ENCODE measurements at regions of chr17 and their contacts with region 1.

Region 1: GRCh38 chr17:60142872-60143499 is 6.8 kb upstream of the CA4 start:
- DNase-seq: peak; percentile 80 to 91
- ATAC-seq: peak; percentile 79 to 88
- H3K4me3 ChIP-seq: peak overlapping the region; percentile 17; the same call in 1 of the 3 replicates
- H3K27ac ChIP-seq: peak overlapping the region in 1 of 2 experiments; percentile 64; a peak in 3 of 6 replicates
- H3K4me1 ChIP-seq: peaks cover 21% of the 10 kb centered on the region
- CTCF ChIP-seq: peak; percentile 94
- EP300 ChIP-seq: no peak
- POLR2A ChIP-seq: no peak
- RAD21 ChIP-seq: peak; percentile 86 to 93

Region 2: GRCh38 chr17:60127068-60128054 is 15.6 kb before region 1 on chr17:
- CTCF ChIA-PET with region 1: interaction called, 90 read pairs
- POLR2A ChIA-PET with region 1: interaction called, 5 read pairs
- DNase-seq: no peak
- ATAC-seq: peak in 1 of 2 experiments; percentile 22; a peak in 1 of 6 replicates
- H3K4me3 ChIP-seq: no peak overlapping the region
- H3K27ac ChIP-seq: no peak overlapping the region
- H3K4me1 ChIP-seq: no peaks in the 10 kb centered on the region
- CTCF ChIP-seq: no peak
- EP300 ChIP-seq: no peak
- POLR2A ChIP-seq: no peak
- RAD21 ChIP-seq: no peak

Region 3: GRCh38 chr17:60154616-60155426 is 11.8 kb after region 1 on chr17:
- CTCF ChIA-PET with region 1: interaction called, 150 read pairs
- POLR2A ChIA-PET with region 1: no interaction called
- DNase-seq: no peak
- ATAC-seq: no peak
- H3K4me3 ChIP-seq: no peak overlapping the region
- H3K27ac ChIP-seq: no peak overlapping the region
- H3K4me1 ChIP-seq: peaks cover 12% of the 10 kb centered on the region
- CTCF ChIP-seq: no peak
- EP300 ChIP-seq: no peak
- POLR2A ChIP-seq: no peak
- RAD21 ChIP-seq: no peak

Region 4: DNA sequence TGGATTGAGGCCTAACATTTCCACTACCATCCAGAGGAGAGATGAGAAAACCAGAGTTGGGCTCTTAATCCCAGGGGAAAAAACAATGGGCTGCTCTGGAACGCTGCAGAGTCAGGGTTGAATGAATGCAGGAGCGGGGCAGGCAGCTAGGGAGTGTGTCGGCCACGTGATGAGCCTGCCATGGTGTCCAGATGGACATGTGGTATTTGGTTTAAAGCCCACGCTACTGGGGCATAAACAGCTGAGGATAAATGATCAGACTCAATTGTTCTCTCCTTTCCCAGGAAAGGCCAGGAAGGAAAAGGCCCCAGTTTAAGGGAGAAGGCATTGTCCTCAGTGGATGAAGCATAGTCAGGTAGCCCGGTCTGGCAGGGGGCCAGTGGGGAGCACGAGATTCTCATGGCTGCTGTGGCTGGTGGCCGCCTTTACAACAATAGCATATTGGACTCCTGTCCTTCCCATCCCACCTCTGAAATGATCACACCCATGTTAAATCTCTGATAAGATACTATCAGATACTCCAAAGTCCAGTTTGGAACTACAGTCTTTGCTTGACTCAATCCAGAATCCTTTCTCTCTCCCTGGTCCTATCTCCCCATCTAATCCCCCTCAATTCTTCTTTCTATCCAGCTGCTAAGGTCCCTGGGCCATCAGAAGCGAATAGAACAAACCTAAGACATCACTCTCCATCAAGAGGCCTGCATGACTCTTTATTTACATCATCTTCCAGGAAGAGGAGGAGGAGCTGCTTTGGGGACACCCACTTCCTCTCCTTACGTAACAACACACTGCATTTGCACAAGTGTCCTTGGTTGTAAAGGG is 27.1 kb after region 1 on chr17:
- CTCF ChIA-PET with region 1: interaction called, 35 read pairs
- POLR2A ChIA-PET with region 1: no interaction called
- DNase-seq: no peak
- ATAC-seq: no peak
- H3K4me3 ChIP-seq: no peak overlapping the region
- H3K27ac ChIP-seq: peak overlapping the region in 1 of 2 experiments; percentile 25; a peak in 1 of 6 replicates
- H3K4me1 ChIP-seq: peaks cover 33% of the 10 kb centered on the region
- CTCF ChIP-seq: no peak
- EP300 ChIP-seq: no peak
- POLR2A ChIP-seq: no peak
- RAD21 ChIP-seq: no peak

Region 5: GRCh38 chr17:60231234-60231633 is 88.2 kb after region 1 on chr17:
- CTCF ChIA-PET with region 1: interaction called, 14 read pairs
- POLR2A ChIA-PET with region 1: no interaction called
- DNase-seq: peak; percentile 41 to 44
- ATAC-seq: peak; percentile 88 to 92
- H3K4me3 ChIP-seq: no peak overlapping the region
- H3K27ac ChIP-seq: no peak overlapping the region
- H3K4me1 ChIP-seq: peaks cover 6% of the 10 kb centered on the region; the same call in 1 of the 3 replicates
- CTCF ChIP-seq: peak; percentile 68
- EP300 ChIP-seq: no peak
- POLR2A ChIP-seq: no peak
- RAD21 ChIP-seq: peak; percentile 68 to 72

Region 6: DNA sequence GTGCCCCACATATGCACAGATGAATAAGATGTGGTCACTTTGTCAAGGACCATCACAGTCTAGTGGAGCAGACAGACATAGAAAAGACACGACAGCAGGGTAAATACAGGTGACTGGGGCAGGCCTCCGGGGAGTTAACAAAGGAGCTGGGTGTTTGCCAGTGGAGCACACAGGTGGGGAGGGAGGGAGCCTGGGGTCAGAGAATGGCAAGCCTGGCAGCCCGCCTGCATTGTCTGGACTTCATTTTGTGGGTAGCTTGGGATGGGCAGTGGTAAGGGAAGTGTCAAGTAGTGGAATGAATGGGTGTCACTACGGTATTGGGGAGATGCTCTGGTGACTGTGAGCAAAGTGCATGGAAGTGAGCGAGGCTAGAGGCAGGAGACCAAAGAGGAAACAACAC is 288.5 kb after region 1 on chr17:
- CTCF ChIA-PET with region 1: interaction called, 21 read pairs
- POLR2A ChIA-PET with region 1: no interaction called
- DNase-seq: no peak
- ATAC-seq: no peak
- H3K4me3 ChIP-seq: no peak overlapping the region
- H3K27ac ChIP-seq: no peak overlapping the region
- H3K4me1 ChIP-seq: no peaks in the 10 kb centered on the region
- CTCF ChIP-seq: no peak
- EP300 ChIP-seq: no peak
- POLR2A ChIP-seq: no peak
- RAD21 ChIP-seq: no peak

Region 7: GRCh38 chr17:60571551-60571950 is 428.6 kb after region 1 on chr17:
- CTCF ChIA-PET with region 1: no interaction called
- POLR2A ChIA-PET with region 1: no interaction called
- DNase-seq: no peak
- ATAC-seq: 0 out of 6 replicates have a peak, but pooled peaks of 1 of the 2 experiments have one; percentile 49
- H3K4me3 ChIP-seq: no peak overlapping the region
- H3K27ac ChIP-seq: no peak overlapping the region
- H3K4me1 ChIP-seq: no peaks in the 10 kb centered on the region
- CTCF ChIP-seq: no peak
- EP300 ChIP-seq: no peak
- POLR2A ChIP-seq: no peak
- RAD21 ChIP-seq: no peak

Region 8: DNA sequence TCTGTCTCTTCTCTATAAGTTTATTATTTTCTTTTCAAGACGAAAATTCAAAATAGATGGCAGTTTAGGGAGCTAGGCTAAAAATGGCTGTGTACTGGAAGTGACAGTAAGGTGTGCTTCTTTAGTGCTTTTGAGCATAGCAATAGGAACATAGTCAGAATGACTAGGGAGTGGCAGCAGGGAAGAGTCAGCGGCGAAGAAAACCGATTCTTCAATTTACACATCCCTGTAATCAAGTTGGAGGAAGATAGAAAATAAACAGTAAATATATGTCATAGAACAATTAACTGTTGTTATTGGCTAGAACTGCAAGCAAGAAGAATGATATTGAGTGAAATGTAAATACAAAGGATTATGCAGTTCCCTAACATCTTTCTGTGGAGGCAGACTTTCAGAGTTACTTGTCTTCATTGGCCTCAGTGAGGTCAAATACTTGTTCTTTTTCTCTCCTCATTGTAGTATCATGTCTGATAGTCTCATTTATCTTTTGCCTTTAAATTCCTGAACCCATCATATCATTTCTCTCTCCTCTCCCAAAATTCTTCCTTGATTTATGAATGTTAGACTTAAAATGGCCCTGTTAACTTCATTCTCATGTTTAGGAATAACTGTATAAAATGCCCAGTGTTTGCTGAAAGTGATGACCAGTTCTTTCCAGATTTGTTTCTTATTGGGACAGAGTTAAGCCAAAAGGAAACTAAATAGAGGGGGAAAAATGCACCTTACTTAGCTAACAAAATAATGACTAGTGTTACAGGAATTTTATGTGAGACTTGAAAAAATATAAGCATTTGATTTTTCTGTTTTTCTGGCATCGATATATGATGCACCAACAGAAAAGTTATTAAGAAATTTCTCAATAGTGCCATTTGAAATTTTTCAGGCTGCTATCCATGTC is 746.1 kb after region 1 on chr17:
- CTCF ChIA-PET with region 1: no interaction called
- POLR2A ChIA-PET with region 1: no interaction called
- DNase-seq: no peak
- ATAC-seq: 0 out of 6 replicates have a peak, but pooled peaks of 1 of the 2 experiments have one; percentile 38
- H3K4me3 ChIP-seq: no peak overlapping the region
- H3K27ac ChIP-seq: no peak overlapping the region
- H3K4me1 ChIP-seq: peaks cover 21% of the 10 kb centered on the region
- CTCF ChIP-seq: no peak
- EP300 ChIP-seq: no peak
- POLR2A ChIP-seq: no peak
- RAD21 ChIP-seq: no peak